ENCODE measurements at regions of chr6 and their contacts with region 1.

Region 1: DNA sequence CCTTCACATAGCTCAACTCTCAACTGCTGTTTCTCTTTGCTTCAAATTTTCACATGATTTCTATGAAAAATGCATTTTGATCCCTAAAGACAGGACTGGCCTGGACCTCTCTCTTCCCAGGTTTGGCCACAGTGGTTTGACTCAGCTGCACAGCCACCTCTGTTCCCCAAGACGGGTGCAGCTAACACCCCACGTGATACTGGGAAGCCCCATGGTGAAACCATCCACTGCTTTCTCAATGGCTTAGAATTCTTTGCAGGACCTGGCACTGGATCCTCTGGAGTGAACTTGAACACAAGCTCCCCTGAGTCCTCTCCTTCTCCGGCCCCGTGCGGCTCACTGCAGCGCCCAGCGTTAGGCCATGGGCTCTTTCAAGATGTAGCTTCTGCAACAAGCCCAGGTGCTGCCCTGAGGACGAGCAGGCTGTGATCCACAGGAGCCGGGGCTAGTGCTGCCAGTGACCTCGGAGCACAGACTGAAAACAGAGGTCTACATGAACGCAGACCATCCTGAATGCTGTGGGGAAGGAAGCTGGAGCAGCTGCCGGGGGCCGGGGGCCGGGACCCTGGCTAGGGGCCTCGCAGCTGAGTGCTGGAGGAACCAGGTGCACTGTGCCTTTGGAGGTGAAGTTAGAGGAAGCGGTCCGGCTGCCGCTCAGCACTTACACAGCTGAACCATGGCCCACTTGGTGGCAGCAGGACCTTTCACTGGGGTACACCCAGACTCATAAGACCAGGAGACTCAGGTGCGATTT is 58.8 kb upstream of the MPC1 start:
- DNase-seq: no peak
- H3K4me3 ChIP-seq: no peak overlapping the region
- H3K4me3 Mint-ChIP-seq: no peak overlapping the region
- H3K27ac ChIP-seq: no peak overlapping the region
- H3K27ac Mint-ChIP-seq: no peak overlapping the region
- H3K4me1 ChIP-seq: peaks cover 9% of the 10 kb centered on the region
- H3K4me1 Mint-ChIP-seq: peaks cover 11 to 22% (median 17%) of the 10 kb centered on the region in 4 donors
- H3K27me3 ChIP-seq: peaks cover 4% of the 10 kb centered on the region
- H3K27me3 Mint-ChIP-seq: peaks cover 2 to 3% of the 10 kb centered on the region in 2 donors

Region 2: GRCh38 chr6:166456395-166457156 is 15.1 kb after region 1 on chr6:
- CTCF ChIA-PET with region 1: interaction called, 12 read pairs
- POLR2A ChIA-PET with region 1: no interaction called
- intact Hi-C with region 1: no loop called
- DNase-seq: peak in 2 of 5 donors; percentile 13 to 24
- H3K4me3 ChIP-seq: no peak overlapping the region
- H3K4me3 Mint-ChIP-seq: no peak overlapping the region
- H3K27ac ChIP-seq: no peak overlapping the region
- H3K27ac Mint-ChIP-seq: peak overlapping the region in 3 of 7 donors; percentile 24 to 63 (median 38)
- H3K4me1 ChIP-seq: no peaks in the 10 kb centered on the region
- H3K4me1 Mint-ChIP-seq: peaks cover 0 to 2% (median under 1%) of the 10 kb centered on the region in 4 donors
- H3K27me3 ChIP-seq: no peaks in the 10 kb centered on the region
- H3K27me3 Mint-ChIP-seq: no peaks in the 10 kb centered on the region

Measured in CD4-positive, alpha-beta memory T cell (primary cell).